ENCODE measurements at regions of chr17 and their contacts with region 1.

Region 1: GRCh38 chr17:70365091-70365583 is 195.8 kb downstream of the KCNJ2 start:
- DNase-seq: peak; percentile 71
- ATAC-seq: peak; percentile 99
- H3K4me3 ChIP-seq: no peak overlapping the region
- H3K27ac ChIP-seq: no peak overlapping the region; the same call in 1 of the 2 replicates
- H3K4me1 ChIP-seq: no peaks in the 10 kb centered on the region
- H3K27me3 ChIP-seq: no peaks in the 10 kb centered on the region
- CTCF ChIP-seq: no peak
- EP300 ChIP-seq: peak in 1 of 2 experiments; percentile 95; a peak in 2 of 4 replicates
- POLR2A ChIP-seq: no peak
- RAD21 ChIP-seq: no peak; the same call in 1 of the 2 replicates

Region 2: DNA sequence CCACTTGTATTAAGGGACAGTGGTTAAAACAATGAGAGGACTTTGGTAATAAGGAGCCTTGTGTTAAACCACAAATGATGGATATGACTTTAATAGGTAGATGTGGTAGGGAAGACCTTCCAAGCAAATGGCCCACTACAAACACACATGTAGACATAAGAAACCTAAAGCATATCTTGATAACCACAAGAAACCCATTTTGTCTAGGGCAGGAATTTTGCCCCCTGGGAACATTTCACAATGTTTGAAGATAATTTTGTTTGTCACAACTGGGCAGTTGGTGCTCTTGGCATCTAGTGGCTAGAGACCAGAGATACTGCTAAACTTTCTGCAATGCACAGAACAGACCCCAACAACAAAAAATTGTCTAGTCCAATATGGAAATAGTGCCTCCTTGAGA is 170.0 kb before region 1 on chr17:
- CTCF ChIA-PET with region 1: no interaction called
- POLR2A ChIA-PET with region 1: no interaction called
- RAD21 ChIA-PET with region 1: no interaction called
- SMC1A ChIA-PET with region 1: no interaction called
- in situ Hi-C with region 1: no loop called
- intact Hi-C with region 1: no loop called
- DNase-seq: no peak
- ATAC-seq: no peak
- H3K4me3 ChIP-seq: no peak overlapping the region
- H3K27ac ChIP-seq: no peak overlapping the region
- H3K4me1 ChIP-seq: no peaks in the 10 kb centered on the region
- H3K27me3 ChIP-seq: no peaks in the 10 kb centered on the region
- CTCF ChIP-seq: no peak
- EP300 ChIP-seq: no peak
- POLR2A ChIP-seq: no peak
- RAD21 ChIP-seq: no peak

Region 3: GRCh38 chr17:70353408-70354092 is 11.6 kb before region 1 on chr17:
- CTCF ChIA-PET with region 1: no interaction called
- POLR2A ChIA-PET with region 1: interaction called, 3 read pairs
- RAD21 ChIA-PET with region 1: interaction called, 4 read pairs
- SMC1A ChIA-PET with region 1: interaction called, 51 read pairs
- in situ Hi-C with region 1: no loop called
- intact Hi-C with region 1: no loop called
- DNase-seq: no peak
- ATAC-seq: peak; percentile 83
- H3K4me3 ChIP-seq: no peak overlapping the region
- H3K27ac ChIP-seq: no peak overlapping the region
- H3K4me1 ChIP-seq: no peaks in the 10 kb centered on the region
- H3K27me3 ChIP-seq: no peaks in the 10 kb centered on the region
- CTCF ChIP-seq: no peak
- EP300 ChIP-seq: no peak
- POLR2A ChIP-seq: no peak
- RAD21 ChIP-seq: no peak

Region 4: GRCh38 chr17:70378076-70378475 is 12.9 kb after region 1 on chr17:
- CTCF ChIA-PET with region 1: interaction called, 4 read pairs
- POLR2A ChIA-PET with region 1: interaction called, 3 read pairs
- RAD21 ChIA-PET with region 1: no interaction called
- SMC1A ChIA-PET with region 1: interaction called, 16 read pairs
- in situ Hi-C with region 1: no loop called
- intact Hi-C with region 1: no loop called
- DNase-seq: no peak
- ATAC-seq: no peak
- H3K4me3 ChIP-seq: no peak overlapping the region
- H3K27ac ChIP-seq: no peak overlapping the region
- H3K4me1 ChIP-seq: no peaks in the 10 kb centered on the region
- H3K27me3 ChIP-seq: no peaks in the 10 kb centered on the region
- CTCF ChIP-seq: no peak
- EP300 ChIP-seq: no peak
- POLR2A ChIP-seq: no peak
- RAD21 ChIP-seq: no peak